ENCODE measurements at regions of chr5 and their contacts with region 1.

Region 1: DNA sequence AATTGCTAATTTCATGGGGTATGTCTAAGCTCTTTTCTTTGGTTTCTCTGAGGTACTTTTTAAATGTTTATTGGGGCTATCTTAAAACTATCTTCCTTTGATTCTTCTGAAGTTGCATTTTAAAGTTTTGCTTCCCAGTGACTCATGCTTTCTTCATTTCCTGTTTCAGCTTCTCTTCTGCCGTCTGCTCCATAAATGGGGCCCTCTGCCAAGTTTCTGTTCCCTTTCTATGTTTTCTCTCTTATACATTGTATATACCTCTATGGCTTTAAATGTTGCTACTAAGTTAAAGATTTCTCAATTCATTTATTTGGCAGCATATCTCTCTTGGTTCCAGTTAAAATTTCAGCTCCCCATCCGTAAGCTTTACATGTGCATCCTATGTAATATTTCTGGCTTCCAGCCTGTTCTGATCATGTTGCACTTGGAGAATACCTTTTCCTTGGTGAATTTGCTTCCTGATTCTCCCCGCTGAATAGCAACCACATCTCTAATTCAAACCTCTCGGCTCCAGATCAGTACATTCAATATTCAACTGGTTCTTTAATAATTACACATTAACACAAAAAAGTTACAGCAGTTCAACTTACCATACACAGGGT is 125.3 kb downstream of the ST8SIA4 start:
- DNase-seq: peak; percentile 42
- ATAC-seq: peak; percentile 40
- H3K4me3 Mint-ChIP-seq: peak overlapping the region; percentile 10
- H3K27ac Mint-ChIP-seq: peak overlapping the region; percentile 80
- H3K4me1 Mint-ChIP-seq: peaks cover 47% of the 10 kb centered on the region
- H3K27me3 Mint-ChIP-seq: no peaks in the 10 kb centered on the region

Region 2: GRCh38 chr5:100600298-100600994 is 177.3 kb before region 1 on chr5:
- CTCF ChIA-PET with region 1: no interaction called
- POLR2A ChIA-PET with region 1: no interaction called
- intact Hi-C with region 1: no loop called
- DNase-seq: no peak
- ATAC-seq: no peak
- H3K4me3 Mint-ChIP-seq: no peak overlapping the region
- H3K27ac Mint-ChIP-seq: no peak overlapping the region
- H3K4me1 Mint-ChIP-seq: no peaks in the 10 kb centered on the region
- H3K27me3 Mint-ChIP-seq: no peaks in the 10 kb centered on the region

Region 3: GRCh38 chr5:100827481-100827889 is 49.7 kb after region 1 on chr5:
- CTCF ChIA-PET with region 1: interaction called, 3 read pairs
- POLR2A ChIA-PET with region 1: no interaction called
- intact Hi-C with region 1: loop called (anchors 2 kb)
- DNase-seq: no peak
- ATAC-seq: peak; percentile 31
- H3K4me3 Mint-ChIP-seq: no peak overlapping the region
- H3K27ac Mint-ChIP-seq: peak overlapping the region; percentile 85
- H3K4me1 Mint-ChIP-seq: peaks cover 42% of the 10 kb centered on the region
- H3K27me3 Mint-ChIP-seq: no peaks in the 10 kb centered on the region

Region 4: DNA sequence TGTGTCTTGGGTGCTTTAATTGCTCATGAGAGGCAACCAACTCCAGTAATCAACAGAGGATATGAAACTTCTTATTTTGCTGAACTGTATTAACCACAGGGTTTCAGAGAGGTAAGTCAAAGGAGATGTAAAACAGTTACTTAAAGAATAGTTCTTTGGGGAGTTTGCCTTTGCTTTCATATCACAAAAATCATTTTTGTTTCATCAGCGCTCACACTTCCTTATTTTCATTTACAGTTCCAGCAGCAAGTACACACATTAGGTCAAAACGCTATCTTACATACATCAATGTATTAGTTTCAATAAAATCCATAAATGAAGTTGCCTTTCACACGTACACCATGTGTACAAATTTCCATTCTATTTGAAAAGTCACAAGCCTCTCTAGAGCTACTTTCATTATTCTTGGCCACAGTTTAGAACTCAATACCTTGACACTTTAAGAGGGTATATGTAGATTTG is 75.2 kb after region 1 on chr5:
- CTCF ChIA-PET with region 1: no interaction called
- POLR2A ChIA-PET with region 1: no interaction called
- intact Hi-C with region 1: loop called in 1 of 2 experiments (anchors 1 kb)
- DNase-seq: no peak
- ATAC-seq: peak; percentile 88
- H3K4me3 Mint-ChIP-seq: peak overlapping the region; percentile 57
- H3K27ac Mint-ChIP-seq: peak overlapping the region; percentile 95
- H3K4me1 Mint-ChIP-seq: peaks cover 44% of the 10 kb centered on the region
- H3K27me3 Mint-ChIP-seq: no peaks in the 10 kb centered on the region

Region 5: GRCh38 chr5:100860407-100860806 is 82.6 kb after region 1 on chr5:
- CTCF ChIA-PET with region 1: no interaction called
- POLR2A ChIA-PET with region 1: interaction called, 3 read pairs
- intact Hi-C with region 1: loop called in 1 of 2 experiments (anchors 2 kb)
- DNase-seq: peak; percentile 35
- ATAC-seq: peak; percentile 53
- H3K4me3 Mint-ChIP-seq: no peak overlapping the region
- H3K27ac Mint-ChIP-seq: peak overlapping the region; percentile 87
- H3K4me1 Mint-ChIP-seq: peaks cover 74% of the 10 kb centered on the region
- H3K27me3 Mint-ChIP-seq: no peaks in the 10 kb centered on the region

Region 6: DNA sequence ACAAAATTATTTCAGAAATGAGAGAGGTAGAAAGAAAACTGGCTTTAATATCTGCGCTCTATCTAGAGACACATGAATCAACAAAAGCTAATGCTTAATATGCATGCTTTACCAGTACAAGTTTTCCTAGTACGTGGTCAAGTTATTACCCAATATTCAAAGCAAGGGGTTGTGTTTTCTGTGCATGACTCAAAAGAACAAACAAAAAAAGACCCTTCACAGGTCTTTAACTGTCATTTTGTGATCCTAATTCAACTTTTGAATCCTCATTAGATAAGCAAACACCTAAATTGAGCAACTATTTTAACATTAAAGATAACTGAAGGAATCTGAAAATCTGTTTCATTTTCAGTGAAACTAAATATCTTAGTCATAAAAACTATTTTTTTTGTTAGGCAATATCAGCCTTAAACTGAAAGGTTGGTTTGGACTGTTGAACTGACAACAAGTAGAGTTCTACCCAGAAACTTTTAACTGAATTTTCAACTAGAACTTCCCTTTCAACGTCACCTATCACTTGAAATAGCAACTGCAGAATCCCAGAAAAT is 112.8 kb after region 1 on chr5:
- CTCF ChIA-PET with region 1: no interaction called
- POLR2A ChIA-PET with region 1: no interaction called
- intact Hi-C with region 1: loop called in 1 of 2 experiments (anchors 1 kb)
- DNase-seq: no peak
- ATAC-seq: peak; percentile 66
- H3K4me3 Mint-ChIP-seq: peak overlapping the region; percentile 55
- H3K27ac Mint-ChIP-seq: peak overlapping the region; percentile 88
- H3K4me1 Mint-ChIP-seq: peaks cover 66% of the 10 kb centered on the region
- H3K27me3 Mint-ChIP-seq: no peaks in the 10 kb centered on the region

Region 7: DNA sequence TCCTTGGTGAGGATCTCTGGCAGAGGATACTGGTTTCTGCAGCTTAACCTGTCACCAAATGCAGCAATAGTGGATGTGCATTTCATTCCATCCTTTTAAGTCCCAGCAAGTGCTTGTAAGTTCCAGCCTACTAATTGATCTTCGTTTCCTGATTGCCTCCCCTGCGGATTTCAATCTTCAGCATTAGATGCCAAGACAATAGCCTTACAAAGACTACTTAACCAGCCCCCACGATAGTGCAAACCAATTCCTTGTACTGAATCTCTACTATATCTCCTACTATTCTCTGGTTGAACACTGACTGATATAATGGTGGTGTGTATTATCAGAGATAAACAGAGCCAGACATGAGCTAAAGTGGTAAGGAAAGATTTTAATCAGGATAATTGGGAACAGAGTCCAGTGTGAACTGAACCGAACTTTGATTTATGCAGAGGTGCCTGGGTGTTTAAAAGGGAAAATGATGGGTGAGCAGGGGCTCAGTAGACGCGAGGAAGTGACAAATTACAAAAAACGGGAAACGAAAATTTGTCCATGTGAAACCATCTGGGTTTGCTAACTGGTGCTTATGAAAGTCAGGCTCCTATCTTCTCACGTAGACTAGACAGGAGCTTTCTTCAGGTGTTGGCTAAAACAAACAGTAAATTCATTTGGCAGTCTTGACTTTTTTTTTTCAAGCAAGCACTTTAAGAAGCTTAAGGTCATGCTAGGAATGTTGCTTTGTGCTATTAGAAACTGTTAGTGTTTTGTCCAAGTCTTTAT is 232.2 kb after region 1 on chr5:
- CTCF ChIA-PET with region 1: no interaction called
- POLR2A ChIA-PET with region 1: no interaction called
- intact Hi-C with region 1: loop called in 1 of 2 experiments (anchors 10 kb)
- DNase-seq: no peak
- ATAC-seq: no peak
- H3K4me3 Mint-ChIP-seq: no peak overlapping the region
- H3K27ac Mint-ChIP-seq: no peak overlapping the region
- H3K4me1 Mint-ChIP-seq: no peaks in the 10 kb centered on the region
- H3K27me3 Mint-ChIP-seq: no peaks in the 10 kb centered on the region

Measured in activated CD4-positive, alpha-beta T cell treated with anti-CD3 and anti-CD28 coated beads for 36 hours (primary cell).